HEK293 (cell line): ENCODE measurements at regions of chr11 and their contacts with region 1.

Region 1: GRCh38 chr11:2293984-2294925 is 7.5 kb downstream of the C11orf21 start:
- H3K4me3 ChIP-seq: no peak overlapping the region
- H3K27ac ChIP-seq: no peak overlapping the region
- H3K4me1 ChIP-seq: no peaks in the 10 kb centered on the region
- CTCF ChIP-seq: no peak

Region 2: DNA sequence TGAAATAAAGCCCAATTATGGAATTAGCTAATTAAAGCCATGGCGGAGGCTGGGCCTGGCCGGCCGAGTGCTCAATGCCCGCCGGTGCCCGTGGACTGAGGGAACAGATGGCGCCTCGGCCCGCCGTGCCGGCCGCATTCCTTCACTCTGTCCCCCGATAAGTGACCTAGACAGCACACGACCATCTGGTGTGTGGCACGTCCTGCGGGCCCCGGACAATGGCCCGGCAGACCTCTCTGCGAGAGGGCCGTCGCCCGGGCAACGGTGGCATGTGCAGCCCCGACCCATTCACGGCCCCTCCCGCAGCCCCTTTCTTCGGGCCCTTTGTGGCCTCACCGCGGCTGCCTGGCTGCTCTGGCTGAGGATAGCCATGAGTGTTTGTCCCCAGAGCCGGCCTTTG is 556.1 kb after region 1 on chr11:
- CTCF ChIA-PET with region 1: no interaction called
- POLR2A ChIA-PET with region 1: interaction called, 11 read pairs
- H3K4me3 ChIP-seq: no peak overlapping the region
- H3K27ac ChIP-seq: no peak overlapping the region
- H3K4me1 ChIP-seq: no peaks in the 10 kb centered on the region
- CTCF ChIP-seq: no peak